ENCODE measurements at regions of chr9 and their contacts with region 1.

Region 1: GRCh38 chr9:17802249-17802857 is 223.5 kb downstream of the SH3GL2 start:
- DNase-seq: no peak
- ATAC-seq: no peak
- H3K4me3 ChIP-seq: no peak overlapping the region
- H3K27ac ChIP-seq: no peak overlapping the region
- H3K4me1 ChIP-seq: peaks cover 0 to 2% (median 0%) of the 10 kb centered on the region in 12 donors
- H3K27me3 ChIP-seq: peaks cover 0 to 12% (median 0%) of the 10 kb centered on the region in 9 donors
- CTCF ChIP-seq: peak in 9 of 12 donors; percentile 23 to 54 (median 42)
- POLR2A ChIP-seq: no peak

Region 2: GRCh38 chr9:17571825-17572224 is 230.5 kb before region 1 on chr9:
- intact Hi-C with region 1: loop called in 1 of 10 experiments (anchors 10 kb)
- DNase-seq: no peak
- ATAC-seq: no peak
- H3K4me3 ChIP-seq: no peak overlapping the region
- H3K27ac ChIP-seq: no peak overlapping the region
- H3K4me1 ChIP-seq: no peaks in the 10 kb centered on the region
- H3K27me3 ChIP-seq: peaks cover 0 to 2% (median 0%) of the 10 kb centered on the region in 9 donors
- CTCF ChIP-seq: no peak
- POLR2A ChIP-seq: no peak

Region 3: GRCh38 chr9:17757816-17758215 is 44.5 kb before region 1 on chr9:
- intact Hi-C with region 1: no loop called
- DNase-seq: no peak
- ATAC-seq: no peak
- H3K4me3 ChIP-seq: no peak overlapping the region
- H3K27ac ChIP-seq: no peak overlapping the region
- H3K4me1 ChIP-seq: no peaks in the 10 kb centered on the region
- H3K27me3 ChIP-seq: no peaks in the 10 kb centered on the region
- CTCF ChIP-seq: no peak
- POLR2A ChIP-seq: no peak

Region 4: DNA sequence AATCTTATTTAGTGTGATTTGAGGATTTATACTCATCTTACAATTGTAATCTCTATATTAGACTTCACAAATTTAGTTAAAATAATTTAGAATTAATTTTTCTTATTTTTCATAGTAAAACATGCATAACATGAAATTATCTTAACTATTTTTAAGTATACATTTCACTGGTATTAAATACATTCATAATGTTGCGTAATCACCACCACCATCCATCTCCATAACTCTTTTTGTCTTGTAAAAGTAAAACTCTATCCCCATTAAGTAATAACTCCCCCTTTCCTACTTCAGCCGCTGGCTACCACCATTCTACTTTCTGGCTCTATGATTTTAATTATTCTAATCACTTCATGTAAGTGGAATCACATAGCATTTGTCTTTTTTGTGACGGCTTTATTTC is 30.1 kb before region 1 on chr9:
- intact Hi-C with region 1: no loop called
- DNase-seq: no peak
- ATAC-seq: no peak
- H3K4me3 ChIP-seq: no peak overlapping the region
- H3K27ac ChIP-seq: no peak overlapping the region
- H3K4me1 ChIP-seq: peaks cover 0 to 9% (median 0%) of the 10 kb centered on the region in 12 donors
- H3K27me3 ChIP-seq: no peaks in the 10 kb centered on the region
- CTCF ChIP-seq: no peak
- POLR2A ChIP-seq: no peak